Activated B cell treated with CpG ODN at 0.5 μM for 24 hours (primary cell): ENCODE measurements at regions of chr13 and their contacts with region 1.

Region 1: GRCh38 chr13:43905435-43906031 is 25.8 kb downstream of the LACC1 start:
- DNase-seq: no peak
- ATAC-seq: peak; percentile 77
- H3K4me3 Mint-ChIP-seq: no peak overlapping the region
- H3K27ac Mint-ChIP-seq: no peak overlapping the region
- H3K4me1 Mint-ChIP-seq: no peaks in the 10 kb centered on the region
- H3K27me3 Mint-ChIP-seq: peaks cover 14% of the 10 kb centered on the region
- CTCF ChIP-seq: peak; percentile 72

Region 2: GRCh38 chr13:43963726-43964125 is 58.2 kb after region 1 on chr13:
- CTCF ChIA-PET with region 1: interaction called, 3 read pairs
- POLR2A ChIA-PET with region 1: no interaction called
- intact Hi-C with region 1: loop called (anchors 5 kb)
- DNase-seq: no peak
- ATAC-seq: no peak
- H3K4me3 Mint-ChIP-seq: no peak overlapping the region
- H3K27ac Mint-ChIP-seq: no peak overlapping the region
- H3K4me1 Mint-ChIP-seq: no peaks in the 10 kb centered on the region
- H3K27me3 Mint-ChIP-seq: peaks cover 4% of the 10 kb centered on the region
- CTCF ChIP-seq: no peak

Region 3: DNA sequence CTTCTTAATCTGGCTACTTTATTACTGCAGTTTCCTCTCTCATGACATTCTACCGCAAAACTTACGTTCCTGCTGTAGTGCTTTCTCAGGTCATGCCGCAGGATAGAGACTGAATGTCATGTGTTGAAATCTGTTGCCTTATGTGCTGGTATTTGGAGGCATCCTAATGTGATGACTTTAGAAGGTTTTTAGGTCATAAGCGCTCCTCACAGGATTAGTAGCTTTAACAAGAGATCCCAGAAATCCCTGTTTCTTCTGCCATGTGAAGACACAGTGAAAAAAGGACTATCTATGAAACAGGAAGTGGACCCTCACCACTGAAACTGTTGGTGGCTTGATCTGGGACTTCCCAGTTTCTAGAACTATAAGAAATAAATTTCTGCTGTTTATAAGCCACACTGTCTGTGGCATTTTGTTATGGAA is 183.5 kb after region 1 on chr13:
- CTCF ChIA-PET with region 1: no interaction called
- POLR2A ChIA-PET with region 1: no interaction called
- intact Hi-C with region 1: no loop called
- DNase-seq: no peak
- ATAC-seq: peak; percentile 40
- H3K4me3 Mint-ChIP-seq: no peak overlapping the region
- H3K27ac Mint-ChIP-seq: no peak overlapping the region
- H3K4me1 Mint-ChIP-seq: peaks cover 8% of the 10 kb centered on the region
- H3K27me3 Mint-ChIP-seq: peaks cover 5% of the 10 kb centered on the region
- CTCF ChIP-seq: no peak

Region 4: DNA sequence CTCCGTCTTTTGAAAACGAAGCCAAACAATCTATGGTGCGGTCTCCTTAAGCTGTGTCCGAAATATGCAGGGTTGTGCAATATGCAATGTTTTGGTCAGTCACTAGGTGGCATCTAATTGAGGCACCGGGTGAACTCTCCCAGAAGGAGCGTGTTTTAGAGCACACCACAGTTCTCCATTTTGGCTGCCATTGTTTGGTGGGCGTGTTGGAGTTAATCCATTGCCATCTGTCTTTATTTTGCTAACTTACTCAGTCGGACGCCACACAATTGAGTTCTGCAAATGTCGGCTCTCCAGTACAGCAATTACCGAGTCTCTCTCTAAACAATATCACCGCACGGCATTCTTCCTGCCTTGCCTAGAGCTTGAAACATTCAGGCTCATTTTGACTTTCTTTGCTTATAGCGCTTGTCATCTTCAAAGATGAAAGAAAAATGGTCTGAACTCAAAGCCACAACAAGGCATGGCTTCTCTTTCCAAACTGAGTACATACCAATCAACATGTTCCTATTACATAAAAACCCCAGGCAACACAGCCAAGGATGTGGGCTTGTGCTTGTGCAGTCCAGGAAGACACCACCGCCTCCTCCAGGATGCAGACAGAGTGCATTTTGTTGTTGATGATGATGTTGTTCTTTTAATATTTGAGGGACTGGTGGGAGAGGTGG is 286.1 kb after region 1 on chr13:
- CTCF ChIA-PET with region 1: no interaction called
- POLR2A ChIA-PET with region 1: no interaction called
- intact Hi-C with region 1: loop called (anchors 5 kb)
- DNase-seq: no peak
- ATAC-seq: no peak
- H3K4me3 Mint-ChIP-seq: no peak overlapping the region
- H3K27ac Mint-ChIP-seq: no peak overlapping the region
- H3K4me1 Mint-ChIP-seq: no peaks in the 10 kb centered on the region
- H3K27me3 Mint-ChIP-seq: peaks cover 9% of the 10 kb centered on the region
- CTCF ChIP-seq: no peak

Region 5: DNA sequence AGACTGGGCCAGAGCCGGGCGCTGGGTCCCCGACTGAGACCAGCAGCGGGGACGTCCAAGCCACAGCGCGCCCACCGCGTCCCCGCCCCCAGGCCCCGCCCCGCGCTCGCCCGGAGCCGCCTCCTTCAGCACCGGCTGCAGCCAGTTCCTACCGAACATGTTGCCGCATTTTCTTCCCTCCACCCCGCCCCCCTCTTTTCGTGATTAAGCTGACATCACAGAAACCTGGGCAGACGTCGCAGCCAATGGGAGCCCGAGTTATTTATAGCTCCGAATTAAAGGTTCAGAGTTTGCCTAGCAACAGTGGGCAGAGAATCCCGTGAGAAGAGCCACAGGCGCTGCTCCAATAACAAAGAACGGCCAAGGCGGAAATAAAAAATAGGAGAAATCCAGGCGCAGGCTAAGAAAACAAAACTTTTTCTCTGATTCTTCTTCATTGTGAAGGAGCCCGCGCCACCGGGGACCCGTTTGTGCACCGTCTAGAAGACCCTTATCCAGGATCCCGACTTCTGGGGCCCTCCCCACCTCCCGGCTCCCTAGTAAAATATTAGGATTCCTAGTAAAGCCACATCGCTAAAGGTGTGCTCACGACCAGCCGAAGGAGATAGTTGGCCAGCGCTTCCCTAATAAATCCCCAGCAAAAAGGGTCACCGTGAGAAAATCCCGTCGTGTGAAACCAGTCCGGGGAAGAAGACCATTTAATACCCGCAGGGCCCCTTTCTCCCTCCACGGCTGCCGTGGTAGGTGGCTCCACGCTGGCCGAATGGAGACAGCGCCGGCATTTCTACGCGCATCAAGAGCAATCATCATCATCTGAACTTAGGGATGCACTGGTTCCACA is 529.8 kb after region 1 on chr13:
- CTCF ChIA-PET with region 1: interaction called, 103 read pairs
- POLR2A ChIA-PET with region 1: no interaction called
- intact Hi-C with region 1: loop called (anchors 1 kb)
- DNase-seq: peak; percentile 78
- ATAC-seq: peak; percentile 90
- H3K4me3 Mint-ChIP-seq: peak overlapping the region; percentile 85
- H3K27ac Mint-ChIP-seq: peak overlapping the region; percentile 69
- H3K4me1 Mint-ChIP-seq: peaks cover 28% of the 10 kb centered on the region
- H3K27me3 Mint-ChIP-seq: peaks cover 8% of the 10 kb centered on the region
- CTCF ChIP-seq: no peak

Region 6: GRCh38 chr13:44969551-44970484 is 1064.3 kb after region 1 on chr13:
- CTCF ChIA-PET with region 1: interaction called, 3 read pairs
- POLR2A ChIA-PET with region 1: no interaction called
- intact Hi-C with region 1: loop called (anchors 1 kb)
- DNase-seq: no peak
- ATAC-seq: no peak
- H3K4me3 Mint-ChIP-seq: no peak overlapping the region
- H3K27ac Mint-ChIP-seq: no peak overlapping the region
- H3K4me1 Mint-ChIP-seq: no peaks in the 10 kb centered on the region
- H3K27me3 Mint-ChIP-seq: no peaks in the 10 kb centered on the region
- CTCF ChIP-seq: no peak